ENCODE measurements at regions of chr11 and their contacts with region 1.

Region 1: GRCh38 chr11:5476184-5476819 is 12.2 kb upstream of the OR52D1 start:
- DNase-seq: no peak
- ATAC-seq: no peak

Region 2: DNA sequence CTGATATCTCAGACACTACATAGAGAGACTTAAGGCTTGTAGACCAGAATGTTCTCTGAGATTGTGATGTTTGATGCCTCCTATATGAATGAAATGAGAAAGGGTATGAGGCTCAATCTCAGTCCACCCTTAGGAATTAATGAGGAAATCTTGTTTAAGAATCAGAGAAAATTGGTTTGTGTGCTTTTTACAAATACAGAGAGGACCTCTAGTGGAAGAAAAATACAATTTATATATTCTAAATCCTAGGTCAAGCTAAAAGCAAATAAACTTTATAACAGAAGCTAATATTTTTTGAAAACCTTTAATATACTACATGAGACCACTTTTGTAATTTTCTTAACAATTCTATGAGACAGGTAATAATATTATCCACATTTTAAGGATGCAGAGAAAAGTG is 77.0 kb after region 1 on chr11:
- intact Hi-C with region 1: loop called (anchors 2 kb)
- DNase-seq: no peak
- ATAC-seq: no peak

Region 3: GRCh38 chr11:5737091-5737490 is 260.8 kb after region 1 on chr11:
- intact Hi-C with region 1: no loop called
- DNase-seq: no peak
- ATAC-seq: no peak